A673 (cell line): ENCODE measurements at regions of chr10 and their contacts with region 1.

Region 1: GRCh38 chr10:101894742-101895141 is 51.1 kb upstream of the KCNIP2 start:
- DNase-seq: no peak
- H3K4me3 ChIP-seq: no peak overlapping the region
- H3K27ac ChIP-seq: no peak overlapping the region
- H3K4me1 ChIP-seq: no peaks in the 10 kb centered on the region
- H3K27me3 ChIP-seq: no peaks in the 10 kb centered on the region
- CTCF ChIP-seq: no peak

Region 2: DNA sequence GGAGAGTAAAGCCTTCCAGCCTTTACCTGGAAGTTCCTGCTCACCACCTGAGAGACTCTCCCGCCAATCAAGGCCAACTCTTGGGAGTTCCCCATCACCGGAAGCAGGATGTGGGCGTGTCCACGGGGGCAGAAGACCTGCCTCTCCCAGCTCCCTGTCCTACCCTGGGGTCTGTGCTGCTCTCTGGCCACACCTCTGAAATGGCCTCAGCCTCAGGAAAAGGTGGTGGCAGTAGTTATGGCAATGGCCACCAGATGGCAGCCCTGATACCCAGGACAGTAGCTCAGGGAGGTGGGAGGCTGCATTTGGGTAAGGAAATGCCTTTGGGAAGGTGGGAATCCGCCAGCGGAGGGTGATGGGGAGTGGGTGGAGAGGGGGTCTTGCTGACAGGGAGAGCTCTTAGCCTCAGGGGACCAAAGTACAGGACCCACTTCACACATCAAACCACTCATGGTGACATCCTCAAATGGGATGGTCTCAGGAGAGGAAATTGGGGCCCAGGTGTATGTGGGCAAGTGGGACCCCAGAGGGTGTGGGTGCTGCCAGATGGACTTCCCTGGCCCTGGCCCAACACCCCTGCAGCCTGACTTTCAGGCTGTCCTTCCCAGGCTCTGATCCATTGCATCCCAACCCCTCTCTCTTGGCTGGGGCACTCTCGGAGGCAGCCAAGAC is 799.1 kb before region 1 on chr10:
- CTCF ChIA-PET with region 1: no interaction called
- POLR2A ChIA-PET with region 1: no interaction called
- intact Hi-C with region 1: no loop called
- DNase-seq: peak; percentile 82
- H3K4me3 ChIP-seq: no peak overlapping the region
- H3K27ac ChIP-seq: no peak overlapping the region
- H3K4me1 ChIP-seq: no peaks in the 10 kb centered on the region
- H3K27me3 ChIP-seq: peaks cover 13% of the 10 kb centered on the region
- CTCF ChIP-seq: peak; percentile 88

Region 3: DNA sequence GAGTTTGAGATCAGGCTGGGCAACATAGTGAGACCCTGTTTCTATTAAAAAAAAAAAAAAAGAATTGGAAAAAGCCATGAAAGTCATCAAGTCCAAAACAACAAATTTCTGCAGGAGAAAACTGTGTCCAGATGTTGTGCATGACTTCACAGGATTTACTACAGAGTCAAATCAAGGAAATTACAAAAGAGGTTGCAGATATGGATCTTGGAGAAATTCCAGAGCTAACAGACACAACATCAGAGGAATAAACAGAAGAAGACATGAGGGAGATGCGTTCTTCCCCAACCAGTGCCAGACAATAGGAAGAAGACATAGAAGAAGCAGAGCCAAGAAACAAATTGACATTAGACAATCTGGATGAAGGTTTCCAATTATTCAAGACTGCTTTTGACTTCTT is 26.8 kb before region 1 on chr10:
- CTCF ChIA-PET with region 1: no interaction called
- POLR2A ChIA-PET with region 1: no interaction called
- intact Hi-C with region 1: no loop called
- DNase-seq: no peak
- H3K4me3 ChIP-seq: no peak overlapping the region
- H3K27ac ChIP-seq: no peak overlapping the region
- H3K4me1 ChIP-seq: no peaks in the 10 kb centered on the region
- H3K27me3 ChIP-seq: no peaks in the 10 kb centered on the region
- CTCF ChIP-seq: no peak

Region 4: GRCh38 chr10:101961591-101962498 is 67.1 kb after region 1 on chr10:
- CTCF ChIA-PET with region 1: no interaction called
- POLR2A ChIA-PET with region 1: interaction called, 17 read pairs
- intact Hi-C with region 1: no loop called
- DNase-seq: no peak
- H3K4me3 ChIP-seq: no peak overlapping the region
- H3K27ac ChIP-seq: no peak overlapping the region
- H3K4me1 ChIP-seq: peaks cover 6% of the 10 kb centered on the region
- H3K27me3 ChIP-seq: no peaks in the 10 kb centered on the region
- CTCF ChIP-seq: no peak